ENCODE measurements at regions of chr18 and their contacts with region 1.

Region 1: GRCh38 chr18:2857491-2858131 is 10.8 kb downstream of the EMILIN2 start:
- DNase-seq: peak; percentile 92
- ATAC-seq: peak; percentile 94

Region 2: GRCh38 chr18:2570772-2571199 is 286.8 kb before region 1 on chr18:
- intact Hi-C with region 1: no loop called
- DNase-seq: peak; percentile 84
- ATAC-seq: peak; percentile 92

Region 3: GRCh38 chr18:2894131-2894840 is 36.7 kb after region 1 on chr18:
- intact Hi-C with region 1: loop called (anchors 2 kb)
- DNase-seq: peak; percentile 82
- ATAC-seq: peak; percentile 91

Region 4: GRCh38 chr18:3153107-3153704 is 295.6 kb after region 1 on chr18:
- intact Hi-C with region 1: no loop called
- DNase-seq: no peak
- ATAC-seq: no peak

Measured in Right ventricle myocardium superior (tissue), 1 donor.